ENCODE measurements at regions of chr15 and their contacts with region 1.

Region 1: GRCh38 chr15:40274350-40275274 is 8.3 kb downstream of the ANKRD63 start:
- DNase-seq: peak; percentile 60
- H3K4me3 ChIP-seq: no peak overlapping the region
- H3K27ac ChIP-seq: no peak overlapping the region
- H3K4me1 ChIP-seq: no peaks in the 10 kb centered on the region
- H3K27me3 ChIP-seq: no peaks in the 10 kb centered on the region
- CTCF ChIP-seq: peak; percentile 100

Region 2: GRCh38 chr15:40108855-40109735 is 165.5 kb before region 1 on chr15 and contains the start of gene BMF:
- CTCF ChIA-PET with region 1: no interaction called
- dilution Hi-C with region 1: no loop called
- in situ Hi-C with region 1: no loop called
- intact Hi-C with region 1: loop called (anchors 5 kb)
- DNase-seq: peak; percentile 97
- H3K4me3 ChIP-seq: peak within 1 kb of the TSS; percentile 55 to 72 (median 67)
- H3K27ac ChIP-seq: no peak within 1 kb of the TSS
- H3K4me1 ChIP-seq: peaks cover 26% of the 10 kb centered on the region
- H3K27me3 ChIP-seq: no peaks in the 10 kb centered on the region
- CTCF ChIP-seq: peak in 1 of 2 donors; percentile 35
- total RNA-seq, gene BMF: 1.5 to 2.2 TPM

Region 3: DNA sequence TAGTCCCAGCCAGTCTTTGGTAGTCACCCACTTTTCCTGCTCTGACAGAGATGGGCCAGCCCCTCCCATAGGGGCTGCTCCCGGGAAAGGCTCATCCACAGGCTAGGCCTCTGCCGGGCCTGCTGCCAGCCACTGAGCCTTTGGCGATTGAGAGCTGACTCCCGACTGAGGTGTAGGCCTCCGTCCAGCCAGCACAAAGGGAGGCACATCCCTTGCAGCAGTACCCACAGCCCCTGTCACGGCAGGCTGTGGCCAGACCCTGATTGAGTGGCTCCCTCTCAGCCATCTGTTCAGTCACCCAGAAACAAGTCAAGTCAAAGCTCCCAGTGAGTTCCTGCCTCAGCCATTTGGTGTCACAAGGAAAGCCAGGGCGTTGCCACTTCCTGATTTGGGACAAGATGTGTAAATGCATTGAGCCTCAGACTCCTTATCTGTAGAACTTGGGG is 42.0 kb before region 1 on chr15:
- CTCF ChIA-PET with region 1: no interaction called
- dilution Hi-C with region 1: no loop called
- in situ Hi-C with region 1: no loop called
- intact Hi-C with region 1: loop called (anchors 5 kb)
- DNase-seq: no peak
- H3K4me3 ChIP-seq: no peak overlapping the region
- H3K27ac ChIP-seq: peak overlapping the region; percentile 45
- H3K4me1 ChIP-seq: peaks cover 39% of the 10 kb centered on the region
- H3K27me3 ChIP-seq: no peaks in the 10 kb centered on the region
- CTCF ChIP-seq: no peak

Region 4: GRCh38 chr15:40310001-40310959 is 35.7 kb after region 1 on chr15:
- CTCF ChIA-PET with region 1: interaction called, 4 read pairs
- dilution Hi-C with region 1: no loop called
- in situ Hi-C with region 1: no loop called
- intact Hi-C with region 1: loop called (anchors 1 kb)
- DNase-seq: no peak
- H3K4me3 ChIP-seq: no peak overlapping the region
- H3K27ac ChIP-seq: no peak overlapping the region
- H3K4me1 ChIP-seq: peaks cover 18% of the 10 kb centered on the region
- H3K27me3 ChIP-seq: no peaks in the 10 kb centered on the region
- CTCF ChIP-seq: peak; percentile 62 to 68

Region 5: DNA sequence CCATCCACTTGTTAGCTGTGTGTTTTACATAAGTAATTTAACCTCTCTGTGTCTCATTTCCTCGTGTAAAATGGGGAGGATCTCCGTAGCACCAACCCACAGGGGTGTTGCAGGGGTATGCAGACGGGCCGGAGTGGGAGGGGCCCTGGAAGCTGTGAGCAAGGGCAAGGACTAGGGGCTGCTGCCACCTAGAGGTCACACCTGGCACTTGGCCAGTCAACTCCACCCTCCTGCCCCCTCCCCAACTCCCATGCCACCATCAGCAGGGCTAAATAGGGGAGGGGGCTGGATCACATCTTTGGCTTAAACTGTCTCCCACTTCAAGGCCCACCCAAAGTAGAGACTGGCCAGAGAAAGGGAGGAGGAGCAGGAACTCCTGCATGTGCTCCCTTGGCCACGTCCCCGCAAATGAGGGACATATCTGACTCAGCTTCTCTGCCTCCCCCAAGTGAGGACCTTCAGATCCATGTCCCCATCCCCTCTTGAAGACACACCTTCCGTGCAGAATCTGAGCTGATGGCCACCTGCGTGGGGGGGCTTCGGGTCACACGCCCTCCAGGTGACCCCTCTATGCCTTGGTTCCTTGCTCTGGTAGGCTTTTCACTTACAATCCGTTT is 63.5 kb after region 1 on chr15:
- CTCF ChIA-PET with region 1: no interaction called
- dilution Hi-C with region 1: no loop called
- in situ Hi-C with region 1: no loop called
- intact Hi-C with region 1: loop called (anchors 1 kb)
- DNase-seq: peak; percentile 66
- H3K4me3 ChIP-seq: peak overlapping the region in 2 of 3 experiments; percentile 1 to 81
- H3K27ac ChIP-seq: peak overlapping the region; percentile 68
- H3K4me1 ChIP-seq: peaks cover 75% of the 10 kb centered on the region
- H3K27me3 ChIP-seq: no peaks in the 10 kb centered on the region
- CTCF ChIP-seq: peak; percentile 63 to 86

Region 6: DNA sequence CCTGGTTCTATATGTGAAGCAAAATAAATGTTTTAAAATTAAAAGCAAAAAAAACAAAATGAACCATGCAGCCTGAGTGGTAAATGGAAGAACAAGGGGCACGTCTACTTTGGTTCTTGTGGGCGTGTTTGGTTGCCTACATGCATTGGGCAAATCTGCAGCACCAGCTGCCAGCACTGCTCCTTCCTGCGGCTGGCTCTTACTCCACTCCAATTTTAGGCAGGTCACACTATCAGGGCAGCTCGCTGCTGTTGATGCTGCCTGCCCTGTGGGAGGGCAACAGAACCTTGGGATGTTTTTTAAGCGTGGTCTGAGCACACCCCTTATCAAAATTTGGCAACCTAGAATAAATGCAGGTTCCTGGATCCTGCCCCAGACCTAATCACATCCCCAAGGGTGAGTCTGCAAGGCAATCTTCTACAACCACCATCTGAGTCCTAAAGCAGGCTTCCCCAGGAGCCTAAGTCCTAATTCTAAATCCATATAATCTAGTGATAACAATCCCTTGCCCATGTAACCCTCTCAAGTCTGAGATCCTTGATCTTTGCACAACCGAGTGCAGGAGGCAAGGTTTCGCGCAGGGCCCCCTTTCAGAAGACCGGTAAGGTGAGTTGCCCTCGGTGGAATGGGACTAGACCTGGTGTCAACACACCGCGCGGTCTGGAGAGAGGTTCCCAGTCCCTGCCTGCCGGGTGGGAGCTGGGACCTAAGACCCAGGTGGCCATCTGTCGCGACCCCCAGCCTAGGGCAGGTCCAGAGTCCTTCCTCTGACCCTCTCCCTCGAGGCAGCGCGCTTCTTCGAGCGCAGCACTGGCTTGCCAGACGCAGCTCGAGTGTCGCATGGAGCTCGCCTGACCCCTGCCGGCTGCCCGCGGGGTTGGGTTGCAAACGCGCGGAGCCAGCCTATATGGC is 146.9 kb after region 1 on chr15:
- CTCF ChIA-PET with region 1: interaction called, 6 read pairs
- dilution Hi-C with region 1: no loop called
- in situ Hi-C with region 1: loop called in 1 of 2 experiments (anchors 5 kb)
- intact Hi-C with region 1: loop called (anchors 1 kb)
- DNase-seq: peak; percentile 57
- H3K4me3 ChIP-seq: peak overlapping the region in 1 of 3 experiments; percentile 24
- H3K27ac ChIP-seq: no peak overlapping the region
- H3K4me1 ChIP-seq: peaks cover 22% of the 10 kb centered on the region
- H3K27me3 ChIP-seq: no peaks in the 10 kb centered on the region
- CTCF ChIP-seq: peak; percentile 76 to 96

Measured in mammary epithelial cell (primary cell).